IMR-90 (cell line): ENCODE measurements at regions of chr7 and their contacts with region 1.

Region 1: GRCh38 chr7:4319280-4319679 is 362.8 kb upstream of the FOXK1 start:
- DNase-seq: no peak
- ATAC-seq: no peak
- H3K4me3 ChIP-seq: no peak overlapping the region
- H3K27ac ChIP-seq: no peak overlapping the region
- H3K4me1 ChIP-seq: no peaks in the 10 kb centered on the region
- H3K27me3 ChIP-seq: no peaks in the 10 kb centered on the region
- CTCF ChIP-seq: no peak
- POLR2A ChIP-seq: no peak
- RAD21 ChIP-seq: no peak

Region 2: DNA sequence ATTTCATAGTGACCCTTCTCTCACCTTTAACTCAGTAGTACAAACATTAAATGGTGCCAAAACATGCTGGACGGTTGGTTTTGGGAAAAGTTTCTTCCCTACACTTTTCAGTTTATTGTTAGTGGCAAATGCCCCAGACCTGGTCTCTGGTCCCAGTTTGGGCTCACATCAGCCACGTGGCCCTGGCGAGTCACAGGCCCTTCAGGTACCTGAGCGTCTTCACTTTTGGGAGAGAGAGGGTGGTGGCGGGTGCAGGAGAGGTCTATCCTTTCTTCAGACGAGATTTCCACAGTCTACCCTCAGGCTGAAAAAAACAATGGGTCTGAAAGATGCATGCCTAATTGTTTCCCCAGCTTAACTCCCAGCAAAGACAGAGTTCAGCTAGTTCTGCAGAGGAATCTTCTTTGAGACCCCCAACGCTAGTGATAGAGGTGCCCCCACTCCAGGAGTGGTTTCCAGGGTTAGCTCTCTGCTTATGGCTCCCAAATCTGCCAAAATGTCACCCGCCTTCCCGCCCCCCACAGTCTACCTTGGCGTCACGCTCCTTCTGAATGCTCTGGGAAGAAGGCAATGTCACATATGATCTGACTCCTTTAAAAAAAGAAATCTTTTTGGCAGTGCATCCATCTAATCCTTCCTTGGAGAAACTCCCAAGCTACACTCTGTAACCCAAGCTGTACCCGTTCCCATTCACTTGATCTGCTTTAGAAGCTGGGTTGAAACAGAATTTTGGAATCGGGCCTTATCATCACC is 21.9 kb before region 1 on chr7:
- CTCF ChIA-PET with region 1: no interaction called
- POLR2A ChIA-PET with region 1: no interaction called
- dilution Hi-C with region 1: no loop called
- in situ Hi-C with region 1: no loop called
- intact Hi-C with region 1: no loop called
- DNase-seq: no peak
- ATAC-seq: no peak
- H3K4me3 ChIP-seq: no peak overlapping the region
- H3K27ac ChIP-seq: no peak overlapping the region
- H3K4me1 ChIP-seq: no peaks in the 10 kb centered on the region
- H3K27me3 ChIP-seq: no peaks in the 10 kb centered on the region
- CTCF ChIP-seq: no peak
- POLR2A ChIP-seq: no peak
- RAD21 ChIP-seq: no peak

Region 3: DNA sequence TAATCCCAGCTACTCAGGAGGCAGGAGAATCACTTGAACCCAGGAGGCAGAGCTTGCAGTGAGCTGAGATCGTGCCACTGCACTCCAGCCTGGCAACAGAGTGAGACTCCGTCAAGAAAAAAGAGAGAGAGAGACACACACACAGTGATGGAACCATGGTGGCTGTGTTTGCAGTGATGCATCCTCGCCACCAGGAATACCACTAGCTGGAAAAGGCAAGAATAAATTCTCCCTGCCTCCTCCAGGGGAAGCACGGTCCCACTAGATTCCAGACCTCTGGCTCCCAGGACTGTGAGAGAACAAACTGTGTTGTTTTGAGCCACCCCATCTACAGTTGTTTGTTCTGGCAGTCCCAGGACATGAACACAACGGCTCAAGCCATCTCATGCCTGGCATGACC is 42.5 kb after region 1 on chr7:
- CTCF ChIA-PET with region 1: no interaction called
- POLR2A ChIA-PET with region 1: interaction called, 10 read pairs
- dilution Hi-C with region 1: no loop called
- in situ Hi-C with region 1: no loop called
- intact Hi-C with region 1: no loop called
- DNase-seq: no peak
- ATAC-seq: no peak
- H3K4me3 ChIP-seq: no peak overlapping the region
- H3K27ac ChIP-seq: no peak overlapping the region
- H3K4me1 ChIP-seq: no peaks in the 10 kb centered on the region
- H3K27me3 ChIP-seq: no peaks in the 10 kb centered on the region
- CTCF ChIP-seq: no peak
- POLR2A ChIP-seq: no peak
- RAD21 ChIP-seq: no peak